ENCODE measurements at regions of chr15 and their contacts with region 1.

Region 1: GRCh38 chr15:101258238-101259144 is 6.6 kb upstream of the CHSY1 start:
- DNase-seq: no peak

Region 2: GRCh38 chr15:101014921-101015841 is 243.3 kb before region 1 on chr15:
- intact Hi-C with region 1: loop called (anchors 1 kb)
- DNase-seq: peak; percentile 90

Region 3: GRCh38 chr15:101121511-101122090 is 136.9 kb before region 1 on chr15:
- intact Hi-C with region 1: loop called (anchors 2 kb)
- DNase-seq: peak; percentile 93

Region 4: GRCh38 chr15:101413239-101413638 is 154.7 kb after region 1 on chr15:
- intact Hi-C with region 1: no loop called
- DNase-seq: no peak

Region 5: GRCh38 chr15:101578437-101578894 is 320.0 kb after region 1 on chr15:
- intact Hi-C with region 1: no loop called
- DNase-seq: no peak